ENCODE measurements at regions of chr4 and their contacts with region 1.

Region 1: GRCh38 chr4:4541661-4542570 is at the start of gene STX18:
- DNase-seq: peak; percentile 74 to 93 (median 86)
- ATAC-seq: peak; percentile 92
- H3K4me3 ChIP-seq: peak within 1 kb of the TSS; percentile 92
- H3K4me3 Mint-ChIP-seq: peak within 1 kb of the TSS; percentile 98
- H3K27ac ChIP-seq: peak within 1 kb of the TSS; percentile 58 to 81
- H3K27ac Mint-ChIP-seq: peak within 1 kb of the TSS; percentile 97
- H3K4me1 ChIP-seq: peaks cover 32% of the 10 kb centered on the region
- H3K4me1 Mint-ChIP-seq: peaks cover 69% of the 10 kb centered on the region
- H3K27me3 ChIP-seq: no peaks in the 10 kb centered on the region
- H3K27me3 Mint-ChIP-seq: no peaks in the 10 kb centered on the region
- CTCF ChIP-seq: no peak
- total RNA-seq, gene STX18: 15.2 to 15.5 TPM

Region 2: DNA sequence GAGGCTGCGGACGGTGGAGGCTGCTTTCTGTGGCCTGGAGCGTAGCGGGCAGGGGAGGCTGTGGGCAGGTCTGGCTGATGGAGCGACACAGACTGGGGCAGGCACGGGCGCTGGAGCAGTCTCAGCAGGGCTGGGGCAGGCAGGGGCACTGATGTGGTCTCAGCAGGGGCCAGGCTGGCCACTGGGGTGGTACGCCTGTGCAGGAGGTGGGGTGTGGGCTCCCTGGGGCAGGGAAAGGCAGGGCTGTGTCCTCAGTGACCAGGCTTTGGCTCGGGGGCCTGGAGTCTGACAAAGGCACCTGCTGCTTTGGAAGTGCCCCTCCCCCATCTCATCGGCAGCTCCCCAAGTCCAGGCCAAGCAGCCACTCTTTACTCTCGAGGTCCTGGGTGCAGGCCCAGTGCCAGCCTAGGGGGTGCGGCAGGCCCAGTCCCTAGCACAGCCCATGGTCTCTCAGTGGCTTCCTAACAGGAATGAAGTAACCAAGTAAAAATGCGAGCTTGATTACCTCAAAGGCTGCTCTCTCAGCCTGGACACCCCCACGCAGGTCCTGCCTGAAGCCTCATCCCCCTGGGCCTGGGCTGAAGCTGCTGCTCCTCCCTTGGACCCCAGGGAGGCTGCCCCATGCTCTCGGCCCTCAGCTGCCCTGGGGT is 720.2 kb before region 1 on chr4:
- CTCF ChIA-PET with region 1: no interaction called
- POLR2A ChIA-PET with region 1: no interaction called
- intact Hi-C with region 1: no loop called
- DNase-seq: no peak
- ATAC-seq: no peak
- H3K4me3 ChIP-seq: no peak overlapping the region
- H3K4me3 Mint-ChIP-seq: no peak overlapping the region
- H3K27ac ChIP-seq: no peak overlapping the region
- H3K27ac Mint-ChIP-seq: no peak overlapping the region
- H3K4me1 ChIP-seq: no peaks in the 10 kb centered on the region
- H3K4me1 Mint-ChIP-seq: no peaks in the 10 kb centered on the region
- H3K27me3 ChIP-seq: no peaks in the 10 kb centered on the region
- H3K27me3 Mint-ChIP-seq: no peaks in the 10 kb centered on the region
- CTCF ChIP-seq: no peak

Region 3: DNA sequence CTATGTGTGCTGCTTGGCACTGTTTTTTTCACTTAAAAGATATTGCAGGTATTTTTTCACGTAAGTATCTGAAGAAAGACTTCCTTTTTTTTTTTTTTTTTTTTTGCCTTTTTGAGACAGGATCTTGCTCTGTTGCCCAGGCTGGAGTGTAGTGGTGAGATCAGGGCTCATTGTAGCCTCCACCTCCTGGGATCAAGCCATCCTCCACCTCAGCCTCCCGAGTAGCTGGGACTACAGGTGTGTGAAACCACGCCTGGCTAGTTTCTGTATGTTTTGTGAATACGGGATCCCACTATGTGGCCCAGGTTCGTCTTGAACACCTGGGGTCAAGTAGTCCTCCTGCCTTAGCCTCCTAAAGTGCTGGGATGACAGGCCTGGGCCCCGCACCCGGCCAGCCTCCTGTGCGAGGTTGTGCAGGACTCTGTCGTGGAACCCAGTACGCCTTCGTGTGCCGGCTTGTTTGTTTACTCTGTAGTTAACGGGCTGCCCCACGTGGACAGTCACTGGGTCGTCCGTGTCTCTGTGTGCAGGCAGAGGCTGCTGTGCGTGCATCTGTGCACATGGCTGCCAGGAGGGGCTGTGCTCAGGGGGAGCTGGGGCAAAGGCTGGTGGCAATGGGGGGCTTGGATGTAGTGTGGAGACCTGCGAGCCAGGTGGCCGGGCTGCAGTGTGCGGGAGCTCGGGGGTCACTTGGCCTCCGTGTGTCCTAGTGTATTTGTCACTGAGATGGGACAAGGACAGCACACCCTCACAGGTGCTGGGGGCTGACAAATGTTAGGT is 596.2 kb before region 1 on chr4:
- CTCF ChIA-PET with region 1: no interaction called
- POLR2A ChIA-PET with region 1: no interaction called
- intact Hi-C with region 1: loop called in 1 of 2 experiments (anchors 10 kb)
- DNase-seq: no peak
- ATAC-seq: no peak
- H3K4me3 ChIP-seq: no peak overlapping the region
- H3K4me3 Mint-ChIP-seq: no peak overlapping the region
- H3K27ac ChIP-seq: no peak overlapping the region
- H3K27ac Mint-ChIP-seq: no peak overlapping the region
- H3K4me1 ChIP-seq: no peaks in the 10 kb centered on the region
- H3K4me1 Mint-ChIP-seq: peaks cover 11% of the 10 kb centered on the region
- H3K27me3 ChIP-seq: no peaks in the 10 kb centered on the region
- H3K27me3 Mint-ChIP-seq: peaks cover 7% of the 10 kb centered on the region
- CTCF ChIP-seq: no peak

Region 4: DNA sequence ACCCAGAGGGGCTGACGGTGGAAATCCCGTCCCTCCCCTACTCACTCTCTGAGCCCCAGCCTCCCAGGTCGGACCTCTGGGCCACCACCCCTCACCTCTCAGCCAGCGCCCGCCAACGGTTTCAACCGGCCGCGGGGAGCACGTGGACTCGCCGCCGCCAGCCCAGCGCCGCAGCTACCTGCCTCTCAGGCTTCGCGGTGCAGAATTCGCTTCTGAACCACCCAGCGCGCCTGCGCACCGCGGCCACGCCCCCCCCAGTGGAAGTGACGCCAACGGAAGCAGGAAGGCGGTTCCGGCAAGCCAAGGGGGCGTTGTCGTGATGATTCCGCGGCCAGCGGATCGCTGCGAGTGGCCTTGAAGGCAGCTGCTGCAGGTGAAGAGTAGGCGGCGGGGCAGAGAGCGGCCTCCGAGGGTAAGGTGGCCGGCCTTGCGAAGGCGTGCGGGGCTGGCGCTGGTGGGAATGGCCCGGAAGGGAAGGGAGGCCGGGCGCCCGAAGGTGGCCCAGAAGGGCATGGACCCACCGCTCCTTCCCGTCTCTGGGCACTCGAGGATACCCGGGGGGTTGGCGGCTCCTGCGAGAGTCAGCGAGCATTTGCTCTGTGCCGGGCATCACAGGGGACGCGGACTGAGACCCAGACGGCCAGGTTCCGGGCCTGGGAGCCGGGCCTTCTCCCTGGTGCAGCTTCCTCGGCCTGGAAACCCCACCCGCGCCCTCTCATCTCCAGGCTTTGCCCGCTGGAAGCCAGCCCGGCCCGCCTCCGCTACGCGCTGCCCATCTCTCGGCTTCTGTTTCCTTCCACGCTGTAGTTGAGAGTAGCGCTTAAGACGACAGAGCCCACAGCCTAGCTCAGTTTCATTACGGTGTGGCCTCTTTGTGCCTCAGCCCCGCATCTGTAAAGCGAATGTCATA is 251.7 kb before region 1 on chr4 and contains the starts of genes LYAR and ZBTB49:
- CTCF ChIA-PET with region 1: no interaction called
- POLR2A ChIA-PET with region 1: interaction called, 3 read pairs
- intact Hi-C with region 1: loop called in 1 of 2 experiments (anchors 2 kb)
- DNase-seq: peak; percentile 94 to 98 (median 96)
- ATAC-seq: peak; percentile 92
- H3K4me3 ChIP-seq: peak within 1 kb of the TSS; percentile 87
- H3K4me3 Mint-ChIP-seq: peak within 1 kb of the TSS; percentile 98
- H3K27ac ChIP-seq: peak within 1 kb of the TSS; percentile 55 to 72
- H3K27ac Mint-ChIP-seq: peak within 1 kb of the TSS; percentile 92
- H3K4me1 ChIP-seq: peaks cover 49% of the 10 kb centered on the region
- H3K4me1 Mint-ChIP-seq: peaks cover 65% of the 10 kb centered on the region
- H3K27me3 ChIP-seq: no peaks in the 10 kb centered on the region
- H3K27me3 Mint-ChIP-seq: no peaks in the 10 kb centered on the region
- CTCF ChIP-seq: no peak
- total RNA-seq, gene LYAR: 13.8 to 13.9 TPM
- total RNA-seq, gene ZBTB49: 6.6 to 8.8 TPM

Region 5: DNA sequence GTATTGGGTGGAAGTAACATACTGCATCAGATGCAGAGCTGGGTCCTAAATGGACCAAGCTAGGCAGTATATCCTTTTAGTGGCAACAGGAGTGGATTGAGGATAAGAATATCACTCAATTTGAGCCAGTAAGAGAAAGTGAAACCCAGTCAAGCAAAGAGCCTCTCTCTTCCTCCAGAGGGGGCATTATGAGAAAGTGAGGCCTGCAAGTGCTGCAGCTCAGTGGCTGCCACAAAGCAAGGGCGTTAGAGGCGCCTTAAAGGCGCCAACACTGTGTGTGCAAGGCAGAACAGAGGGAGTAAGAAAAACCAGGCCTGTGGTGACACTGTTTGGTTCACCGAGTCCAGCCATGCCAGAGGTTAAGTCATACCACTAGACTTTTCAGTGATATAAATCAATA is 17.6 kb before region 1 on chr4:
- CTCF ChIA-PET with region 1: interaction called, 7 read pairs
- POLR2A ChIA-PET with region 1: interaction called, 11 read pairs
- intact Hi-C with region 1: no loop called
- DNase-seq: peak in 9 of 14 experiments; percentile 1 to 72 (median 15)
- ATAC-seq: peak; percentile 95
- H3K4me3 ChIP-seq: no peak overlapping the region
- H3K4me3 Mint-ChIP-seq: peak overlapping the region; percentile 9
- H3K27ac ChIP-seq: no peak overlapping the region
- H3K27ac Mint-ChIP-seq: peak overlapping the region; percentile 57
- H3K4me1 ChIP-seq: no peaks in the 10 kb centered on the region
- H3K4me1 Mint-ChIP-seq: peaks cover 51% of the 10 kb centered on the region
- H3K27me3 ChIP-seq: no peaks in the 10 kb centered on the region
- H3K27me3 Mint-ChIP-seq: no peaks in the 10 kb centered on the region
- CTCF ChIP-seq: no peak

Region 6: DNA sequence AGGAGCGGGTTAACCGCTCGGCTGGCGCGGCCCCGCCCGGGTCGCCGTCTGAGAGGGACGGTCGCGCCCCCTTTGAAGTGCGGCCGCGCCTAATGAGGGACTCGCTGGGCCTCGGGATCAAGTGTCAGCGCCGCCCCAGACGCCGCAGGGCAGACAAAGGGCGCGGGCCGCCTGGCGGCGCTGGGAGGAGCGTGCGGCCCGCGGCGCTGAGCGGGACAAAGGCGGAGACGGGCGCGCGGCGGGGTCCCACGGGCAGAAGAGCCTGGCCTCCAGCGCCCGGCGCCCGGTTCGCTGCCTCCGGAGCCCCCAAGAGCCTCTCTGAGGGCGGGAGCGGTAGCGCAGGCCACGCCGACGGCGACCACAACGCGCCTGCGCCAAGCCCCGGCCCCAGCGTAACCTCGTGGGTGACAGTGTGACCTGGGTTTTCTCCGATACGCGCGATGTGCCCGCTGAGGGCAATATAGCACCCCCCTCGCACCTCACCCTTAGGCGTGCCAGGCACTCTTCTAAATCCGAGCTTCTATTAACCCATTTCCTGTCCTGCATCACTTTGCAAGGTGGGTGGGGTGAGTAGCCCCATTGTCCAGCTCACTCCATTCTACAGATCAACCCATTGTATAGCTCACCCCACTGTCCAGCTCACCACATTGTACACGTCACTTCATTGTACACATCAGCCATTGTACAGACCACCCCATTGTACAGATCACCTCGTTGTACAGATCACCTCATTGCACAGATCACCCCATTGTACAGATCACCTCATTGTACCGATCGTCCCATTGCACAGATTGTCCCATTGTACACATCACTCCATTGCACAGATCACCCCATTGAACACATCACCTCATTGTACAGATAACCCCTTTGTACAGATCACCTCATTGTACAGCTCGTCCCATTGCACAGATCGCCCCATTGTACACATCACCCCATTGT is 33.6 kb after region 1 on chr4:
- CTCF ChIA-PET with region 1: interaction called, 5 read pairs
- POLR2A ChIA-PET with region 1: interaction called, 25 read pairs
- intact Hi-C with region 1: loop called (anchors 1 to 2 kb)
- DNase-seq: peak; percentile 28 to 84 (median 56)
- ATAC-seq: peak; percentile 83
- H3K4me3 ChIP-seq: peak overlapping the region; percentile 70
- H3K4me3 Mint-ChIP-seq: peak overlapping the region; percentile 87
- H3K27ac ChIP-seq: no peak overlapping the region
- H3K27ac Mint-ChIP-seq: peak overlapping the region; percentile 5
- H3K4me1 ChIP-seq: peaks cover 11% of the 10 kb centered on the region
- H3K4me1 Mint-ChIP-seq: peaks cover 10% of the 10 kb centered on the region
- H3K27me3 ChIP-seq: no peaks in the 10 kb centered on the region
- H3K27me3 Mint-ChIP-seq: no peaks in the 10 kb centered on the region
- CTCF ChIP-seq: peak; percentile 41

Region 7: DNA sequence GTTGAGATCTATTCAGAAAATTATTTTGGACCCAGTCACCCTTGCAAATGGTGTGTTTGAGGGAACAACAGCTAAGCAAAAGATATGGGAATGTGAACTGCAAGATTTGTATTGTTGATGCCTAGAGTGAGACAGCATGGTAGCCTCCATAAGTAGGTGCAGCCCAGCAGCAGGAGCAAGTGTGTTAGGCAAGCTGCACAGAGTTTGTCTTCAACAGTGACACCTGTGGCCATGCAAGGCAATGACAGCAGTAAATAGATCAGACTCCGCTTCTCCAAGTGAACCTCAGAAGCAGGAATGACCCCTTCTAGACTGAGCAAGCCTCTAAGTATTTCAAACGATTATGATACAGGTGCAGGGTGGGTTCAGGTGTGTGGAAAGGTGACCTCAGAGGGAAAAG is 184.1 kb after region 1 on chr4:
- CTCF ChIA-PET with region 1: no interaction called
- POLR2A ChIA-PET with region 1: no interaction called
- intact Hi-C with region 1: no loop called
- DNase-seq: no peak
- ATAC-seq: no peak
- H3K4me3 ChIP-seq: no peak overlapping the region
- H3K4me3 Mint-ChIP-seq: no peak overlapping the region
- H3K27ac ChIP-seq: no peak overlapping the region
- H3K27ac Mint-ChIP-seq: no peak overlapping the region
- H3K4me1 ChIP-seq: no peaks in the 10 kb centered on the region
- H3K4me1 Mint-ChIP-seq: no peaks in the 10 kb centered on the region
- H3K27me3 ChIP-seq: no peaks in the 10 kb centered on the region
- H3K27me3 Mint-ChIP-seq: no peaks in the 10 kb centered on the region
- CTCF ChIP-seq: no peak